ENCODE measurements at regions of chr4 and their contacts with region 1.

Region 1: DNA sequence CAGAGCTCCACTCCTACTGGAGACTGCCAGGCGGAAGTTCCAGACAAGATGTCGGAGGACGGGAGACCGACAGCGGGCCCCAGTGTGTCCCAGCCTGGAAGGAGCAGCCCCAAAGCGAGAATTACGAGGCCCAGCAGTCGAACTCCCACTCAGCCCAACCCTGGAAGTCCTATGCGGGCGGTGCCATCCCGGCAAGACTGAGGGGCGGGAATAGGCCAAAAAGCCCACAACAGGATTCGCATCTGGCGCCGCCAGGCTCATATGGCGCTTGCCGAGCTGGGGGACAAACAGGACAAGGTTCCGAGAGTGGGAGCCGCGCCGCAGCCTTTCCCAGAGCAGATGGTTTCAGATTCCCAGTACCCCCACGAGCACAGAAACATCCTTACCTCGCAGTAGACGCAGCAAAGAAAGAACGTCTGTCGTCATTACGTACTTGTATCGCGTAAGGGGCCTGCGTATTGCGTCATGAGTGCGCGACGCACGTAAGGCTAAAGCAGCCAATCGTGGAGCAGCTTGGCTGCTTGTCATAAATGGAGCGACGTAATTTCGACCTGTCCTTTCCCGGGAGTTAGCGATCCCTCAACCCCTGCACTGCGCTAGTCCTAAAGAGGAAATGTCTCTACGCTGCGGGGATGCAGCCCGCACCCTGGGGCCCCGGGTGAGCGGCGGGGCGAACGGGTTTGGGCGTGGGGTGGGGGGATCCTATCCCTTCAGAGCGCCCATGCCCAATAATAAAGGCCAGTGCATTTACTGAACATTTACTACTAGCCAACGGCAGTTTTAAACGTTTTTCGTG is at the starts of genes LIAS and RPL9:
- DNase-seq: peak; percentile 99
- H3K4me3 ChIP-seq: peak within 1 kb of the TSS; percentile 70 to 79 (median 74)
- H3K27ac ChIP-seq: peak within 1 kb of the TSS; percentile 97 to 98 (median 98)
- H3K4me1 ChIP-seq: peaks cover 0 to 40% (median 36%) of the 10 kb centered on the region in 4 donors
- H3K27me3 ChIP-seq: no peaks in the 10 kb centered on the region
- CTCF ChIP-seq: no peak
- EP300 ChIP-seq: peak in 2 of 4 donors; percentile 46 to 83
- POLR2A ChIP-seq: peak; percentile 93 to 96
- total RNA-seq, gene LIAS: 16.1 to 24.8 (median 18.8) TPM
- total RNA-seq, gene RPL9: 4,848 to 14,511 (median 7,301) TPM

Region 2: GRCh38 chr4:39308611-39309010 is 150.1 kb before region 1 on chr4:
- intact Hi-C with region 1: no loop called
- DNase-seq: no peak
- H3K4me3 ChIP-seq: no peak overlapping the region
- H3K27ac ChIP-seq: peak overlapping the region in 1 of 4 donors; percentile 40
- H3K4me1 ChIP-seq: no peaks in the 10 kb centered on the region
- H3K27me3 ChIP-seq: no peaks in the 10 kb centered on the region
- CTCF ChIP-seq: no peak
- EP300 ChIP-seq: no peak
- POLR2A ChIP-seq: no peak

Region 3: DNA sequence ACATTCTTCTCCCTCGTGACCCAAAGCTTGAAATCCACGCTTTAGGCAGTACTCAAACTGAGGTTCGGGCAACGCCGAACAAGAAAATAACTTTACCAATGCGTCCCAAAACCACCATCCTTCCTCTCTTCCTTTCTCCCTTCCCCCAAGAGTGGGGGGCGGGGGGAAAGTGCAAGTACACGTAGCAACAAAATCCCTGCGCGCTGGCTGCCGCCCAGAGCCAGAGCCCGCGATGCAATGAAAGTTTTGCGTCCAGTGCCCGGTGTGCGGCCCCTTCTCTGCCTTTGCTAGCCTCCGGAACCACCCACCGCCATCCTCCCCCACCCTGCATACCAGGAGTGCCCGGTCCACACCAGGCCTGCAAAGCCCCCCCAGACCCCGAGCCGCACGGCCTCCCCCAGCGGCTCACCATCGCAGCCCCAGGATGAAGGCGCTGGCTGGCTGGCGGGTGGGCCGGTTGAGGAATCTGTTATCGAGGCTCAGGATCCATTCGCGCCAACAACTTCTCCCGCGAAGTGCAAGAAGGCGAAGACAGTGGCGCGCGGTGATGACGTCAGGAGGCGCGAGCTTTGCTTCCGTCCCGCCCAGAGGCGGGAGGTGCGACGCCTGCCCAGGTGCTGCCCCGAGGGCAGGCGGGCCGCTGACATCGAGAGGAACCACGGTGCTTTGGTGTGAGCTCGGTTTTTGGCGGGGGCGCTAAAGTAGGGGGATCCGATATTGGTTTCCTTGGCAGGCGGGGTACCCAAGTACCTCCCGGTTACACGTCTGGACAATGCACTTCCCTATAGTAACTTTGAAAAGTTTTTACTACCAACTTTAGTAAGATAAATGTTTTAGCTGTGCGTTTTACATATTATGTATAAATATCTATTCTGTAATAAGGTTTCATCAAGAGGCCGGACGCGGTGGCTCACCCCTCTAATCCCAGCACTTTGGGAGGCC is 92.6 kb before region 1 on chr4 and contains the start of gene RFC1:
- intact Hi-C with region 1: loop called (anchors 5 kb)
- DNase-seq: peak; percentile 96
- H3K4me3 ChIP-seq: peak within 1 kb of the TSS; percentile 89 to 93 (median 92)
- H3K27ac ChIP-seq: peak within 1 kb of the TSS; percentile 87 to 93 (median 90)
- H3K4me1 ChIP-seq: peaks cover 0 to 19% (median 15%) of the 10 kb centered on the region in 4 donors
- H3K27me3 ChIP-seq: no peaks in the 10 kb centered on the region
- CTCF ChIP-seq: no peak
- EP300 ChIP-seq: no peak
- POLR2A ChIP-seq: peak in 1 of 2 donors; percentile 37
- total RNA-seq, gene RFC1: 30.2 to 46.6 (median 38.6) TPM

Region 4: GRCh38 chr4:39514888-39515401 is 56.2 kb after region 1 on chr4:
- intact Hi-C with region 1: no loop called
- DNase-seq: no peak
- H3K4me3 ChIP-seq: no peak overlapping the region
- H3K27ac ChIP-seq: no peak overlapping the region
- H3K4me1 ChIP-seq: no peaks in the 10 kb centered on the region
- H3K27me3 ChIP-seq: no peaks in the 10 kb centered on the region
- CTCF ChIP-seq: no peak
- EP300 ChIP-seq: no peak
- POLR2A ChIP-seq: no peak

Region 5: GRCh38 chr4:39527273-39528060 is 68.8 kb after region 1 on chr4 and contains the start of gene UGDH:
- intact Hi-C with region 1: loop called (anchors 2 kb)
- DNase-seq: peak; percentile 98
- H3K4me3 ChIP-seq: peak within 1 kb of the TSS; percentile 70 to 92 (median 90)
- H3K27ac ChIP-seq: peak within 1 kb of the TSS; percentile 89 to 98 (median 97)
- H3K4me1 ChIP-seq: peaks cover 0 to 28% (median 21%) of the 10 kb centered on the region in 4 donors
- H3K27me3 ChIP-seq: no peaks in the 10 kb centered on the region
- CTCF ChIP-seq: no peak
- EP300 ChIP-seq: peak in 1 of 4 donors; percentile 9
- POLR2A ChIP-seq: peak; percentile 79 to 92
- total RNA-seq, gene UGDH: 33.4 to 51.2 (median 43.0) TPM

Region 6: DNA sequence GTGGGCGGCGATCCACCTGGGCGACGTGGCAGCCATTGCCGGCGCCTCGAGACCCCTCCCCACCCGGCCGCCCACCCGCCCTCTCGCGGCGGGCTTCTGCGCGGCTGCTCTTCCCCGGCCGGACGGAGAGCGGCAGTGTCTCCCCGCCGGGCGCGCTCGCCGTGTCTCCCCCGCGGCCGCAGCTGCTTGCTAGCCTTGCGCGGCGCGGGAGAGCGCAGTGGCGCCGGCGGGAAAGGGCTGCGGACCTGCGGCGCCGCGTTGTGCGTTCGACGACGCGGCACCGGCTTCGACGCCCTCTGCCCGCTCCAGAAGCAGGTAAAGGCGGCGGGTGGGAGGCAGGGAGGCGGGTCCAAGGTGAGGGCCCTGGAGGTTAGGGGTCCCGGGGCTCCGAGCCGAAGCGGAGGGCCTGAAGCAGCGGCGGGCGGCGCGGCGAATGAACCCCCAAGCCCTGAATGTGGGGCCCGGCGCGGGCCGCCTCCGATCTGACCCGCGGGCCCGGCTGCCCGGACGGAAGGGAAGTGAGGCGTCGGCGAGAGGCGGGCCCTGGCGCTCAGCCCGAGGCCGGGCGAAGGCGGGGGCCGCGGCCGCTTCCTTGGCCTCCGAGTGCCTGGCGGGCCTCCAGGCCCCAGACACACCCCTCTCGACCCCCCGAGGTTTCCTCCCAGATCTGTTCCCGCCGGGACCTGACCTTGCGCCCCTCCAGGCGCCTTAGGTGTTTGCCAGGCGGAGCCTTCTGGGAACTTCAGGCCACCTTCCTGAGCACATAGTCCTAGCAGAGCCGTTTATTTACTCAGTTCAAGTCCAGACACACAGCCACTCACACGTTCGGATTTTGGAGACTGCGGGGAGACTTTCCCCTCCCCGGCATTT is 598.2 kb after region 1 on chr4 and contains the start of gene N4BP2:
- intact Hi-C with region 1: loop called (anchors 2 kb)
- DNase-seq: peak; percentile 89
- H3K4me3 ChIP-seq: peak within 1 kb of the TSS; percentile 76 to 88 (median 86)
- H3K27ac ChIP-seq: peak within 1 kb of the TSS; percentile 98 to 100 (median 100)
- H3K4me1 ChIP-seq: peaks cover 0 to 27% (median 21%) of the 10 kb centered on the region in 4 donors
- H3K27me3 ChIP-seq: no peaks in the 10 kb centered on the region
- CTCF ChIP-seq: peak in 3 of 4 experiments; percentile 21 to 72 (median 25)
- EP300 ChIP-seq: no peak
- POLR2A ChIP-seq: peak; percentile 70 to 73
- total RNA-seq, gene N4BP2: 7.9 to 11.9 (median 9.2) TPM